ENCODE measurements at regions of chr21 and their contacts with region 1.

Region 1: DNA sequence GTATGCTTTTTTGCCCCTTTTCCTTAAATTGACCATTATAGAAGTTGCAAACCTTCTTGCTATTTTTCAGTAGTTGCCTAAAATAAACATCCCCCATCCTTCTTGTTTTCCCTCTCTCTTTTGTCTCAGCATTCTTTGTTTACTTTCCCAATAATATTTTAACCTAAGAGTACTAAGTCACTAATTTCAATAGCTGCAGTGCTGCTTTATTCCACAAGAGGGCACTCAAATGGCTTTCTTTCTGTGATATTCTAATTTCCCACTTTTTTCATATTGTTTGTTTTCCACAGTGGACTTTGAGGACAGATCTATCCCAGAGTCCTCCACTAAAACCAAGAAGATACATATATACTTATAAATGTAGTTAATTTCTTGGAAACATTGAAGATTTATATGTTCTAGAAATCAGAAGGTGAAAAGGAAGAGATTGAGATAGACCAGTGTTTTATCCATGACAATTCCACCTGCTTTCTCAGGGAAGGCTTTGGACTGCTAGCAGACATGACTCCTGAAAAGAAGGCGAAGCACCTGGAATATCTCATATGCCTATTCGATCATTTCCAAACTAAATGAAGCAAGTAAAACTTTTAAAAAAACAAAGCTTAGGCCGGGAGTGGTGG is 104.8 kb upstream of the GRIK1 start:
- DNase-seq: peak; percentile 28
- H3K4me3 ChIP-seq: no peak overlapping the region
- H3K27ac ChIP-seq: no peak overlapping the region
- H3K4me1 ChIP-seq: no peaks in the 10 kb centered on the region
- H3K27me3 ChIP-seq: no peaks in the 10 kb centered on the region

Region 2: DNA sequence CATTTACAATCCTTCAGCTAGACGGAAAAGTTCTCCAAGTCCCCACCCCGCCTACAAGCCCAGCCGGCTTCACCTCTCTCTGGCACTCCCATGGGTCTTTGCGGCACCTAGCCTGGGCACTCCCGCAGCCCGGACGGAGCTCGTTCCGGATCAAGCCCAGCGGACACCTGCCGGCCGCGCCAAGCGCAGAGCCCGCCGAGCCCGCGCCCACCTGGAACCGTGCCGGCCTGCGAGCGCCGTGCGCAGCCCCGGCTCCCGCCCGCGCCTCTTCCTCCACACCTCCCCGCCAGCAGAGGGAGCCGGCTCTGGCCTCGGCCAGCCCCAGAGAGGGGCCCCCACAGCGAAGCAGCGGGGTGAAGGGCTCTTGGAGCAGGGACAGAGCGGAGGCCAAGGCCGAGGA is 1043.8 kb after region 1 on chr21:
- in situ Hi-C with region 1: loop called (anchors 10 kb)
- DNase-seq: no peak
- H3K4me3 ChIP-seq: no peak overlapping the region
- H3K27ac ChIP-seq: no peak overlapping the region
- H3K4me1 ChIP-seq: no peaks in the 10 kb centered on the region
- H3K27me3 ChIP-seq: no peaks in the 10 kb centered on the region; the same call in 1 of the 2 replicates

Measured in GM23248 (cell line).